Activated CD4-positive, alpha-beta T cell treated with anti-CD3 and anti-CD28 coated beads, Interleukin-2, amount 10 ng/mL, durations not matched to agents 24 days and 14 days (primary cell): ENCODE measurements at regions of chr15 and their contacts with region 1.

Region 1: GRCh38 chr15:78437762-78438302 is at the start of gene IREB2:
- DNase-seq: peak; percentile 100
- H3K4me3 Mint-ChIP-seq: peak within 1 kb of the TSS; percentile 91
- H3K27ac Mint-ChIP-seq: peak within 1 kb of the TSS; percentile 97
- H3K4me1 Mint-ChIP-seq: peaks cover 35% of the 10 kb centered on the region
- H3K27me3 Mint-ChIP-seq: no peaks in the 10 kb centered on the region
- total RNA-seq, gene IREB2: 89.1 and 89.4 TPM in 2 replicates

Region 2: DNA sequence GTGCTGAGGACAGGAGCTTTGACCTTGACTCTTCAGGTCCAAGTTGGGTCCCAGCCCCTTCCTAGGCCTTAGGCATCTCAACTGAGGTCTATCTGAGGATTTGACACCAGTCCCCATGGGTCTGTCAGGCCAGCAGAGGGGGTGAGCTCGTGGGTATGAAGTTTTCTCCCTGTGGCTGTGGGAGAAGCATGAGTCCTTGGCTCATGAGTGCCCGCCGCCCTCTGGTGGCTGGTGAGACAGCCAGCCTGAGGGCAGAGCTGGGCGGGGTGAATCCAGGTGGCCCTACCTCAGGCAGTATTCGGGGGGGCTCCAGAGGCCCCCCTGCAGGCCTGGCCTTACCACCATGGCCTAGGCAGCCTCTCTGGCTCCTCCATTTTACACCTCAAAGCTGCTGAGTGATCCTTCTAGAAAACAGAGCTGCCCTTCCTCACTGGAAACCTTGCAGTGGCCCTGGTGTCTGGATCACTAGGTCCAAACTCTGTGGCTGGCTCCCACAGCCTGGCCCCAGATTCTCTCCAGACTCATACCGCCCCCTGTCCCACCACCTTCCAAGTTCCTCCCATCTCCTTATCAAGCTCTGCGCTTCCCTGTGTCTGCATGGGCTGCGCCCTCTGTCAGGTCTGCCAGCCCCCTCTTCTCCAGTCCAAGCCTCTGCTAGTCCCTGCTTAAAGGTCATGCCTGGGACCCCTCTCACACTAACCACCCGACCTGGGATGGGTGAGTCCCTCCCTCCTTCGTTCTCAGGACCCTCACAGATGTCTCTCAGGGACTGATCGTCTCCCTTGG is 329.3 kb before region 1 on chr15:
- intact Hi-C with region 1: no loop called
- DNase-seq: peak; percentile 94
- H3K4me3 Mint-ChIP-seq: no peak overlapping the region
- H3K27ac Mint-ChIP-seq: no peak overlapping the region
- H3K4me1 Mint-ChIP-seq: peaks cover 53% of the 10 kb centered on the region
- H3K27me3 Mint-ChIP-seq: no peaks in the 10 kb centered on the region

Region 3: GRCh38 chr15:78149068-78149804 is 288.6 kb before region 1 on chr15 and contains the start of gene IDH3A:
- intact Hi-C with region 1: loop called (anchors 1 kb)
- DNase-seq: peak; percentile 100
- H3K4me3 Mint-ChIP-seq: peak within 1 kb of the TSS; percentile 98
- H3K27ac Mint-ChIP-seq: peak within 1 kb of the TSS; percentile 93
- H3K4me1 Mint-ChIP-seq: peaks cover 38% of the 10 kb centered on the region
- H3K27me3 Mint-ChIP-seq: no peaks in the 10 kb centered on the region
- total RNA-seq, gene IDH3A: 165 and 169 TPM in 2 replicates

Region 4: GRCh38 chr15:78299101-78299930 is 138.5 kb before region 1 on chr15 and contains the start of gene SKIC8:
- intact Hi-C with region 1: loop called (anchors 1 kb)
- DNase-seq: peak; percentile 98
- H3K4me3 Mint-ChIP-seq: peak within 1 kb of the TSS; percentile 99
- H3K27ac Mint-ChIP-seq: peak within 1 kb of the TSS; percentile 96
- H3K4me1 Mint-ChIP-seq: peaks cover 22% of the 10 kb centered on the region
- H3K27me3 Mint-ChIP-seq: no peaks in the 10 kb centered on the region
- total RNA-seq, gene SKIC8: 57.6 and 62.2 TPM in 2 replicates

Region 5: DNA sequence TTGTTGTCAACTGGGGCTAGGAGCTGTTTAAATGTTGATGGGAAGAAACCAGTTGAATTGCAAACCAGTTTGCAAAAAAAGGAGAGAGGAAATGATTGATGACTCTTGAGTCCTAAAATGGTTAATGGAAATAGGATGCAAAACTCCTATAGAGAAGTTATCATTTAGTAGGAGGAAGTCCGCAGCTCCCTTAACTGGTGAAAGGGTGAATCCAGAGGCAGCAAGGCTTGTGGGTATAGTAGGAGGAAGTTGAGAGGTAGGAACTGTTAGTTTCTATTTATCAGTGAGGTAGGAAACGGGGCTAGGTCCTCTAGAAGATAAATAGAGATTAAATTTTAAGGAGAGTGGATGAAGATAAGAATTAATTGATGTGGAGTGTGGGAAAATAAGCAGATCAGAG is 15.6 kb after region 1 on chr15:
- intact Hi-C with region 1: no loop called
- DNase-seq: no peak
- H3K4me3 Mint-ChIP-seq: no peak overlapping the region
- H3K27ac Mint-ChIP-seq: no peak overlapping the region
- H3K4me1 Mint-ChIP-seq: peaks cover 46% of the 10 kb centered on the region
- H3K27me3 Mint-ChIP-seq: no peaks in the 10 kb centered on the region

Region 6: DNA sequence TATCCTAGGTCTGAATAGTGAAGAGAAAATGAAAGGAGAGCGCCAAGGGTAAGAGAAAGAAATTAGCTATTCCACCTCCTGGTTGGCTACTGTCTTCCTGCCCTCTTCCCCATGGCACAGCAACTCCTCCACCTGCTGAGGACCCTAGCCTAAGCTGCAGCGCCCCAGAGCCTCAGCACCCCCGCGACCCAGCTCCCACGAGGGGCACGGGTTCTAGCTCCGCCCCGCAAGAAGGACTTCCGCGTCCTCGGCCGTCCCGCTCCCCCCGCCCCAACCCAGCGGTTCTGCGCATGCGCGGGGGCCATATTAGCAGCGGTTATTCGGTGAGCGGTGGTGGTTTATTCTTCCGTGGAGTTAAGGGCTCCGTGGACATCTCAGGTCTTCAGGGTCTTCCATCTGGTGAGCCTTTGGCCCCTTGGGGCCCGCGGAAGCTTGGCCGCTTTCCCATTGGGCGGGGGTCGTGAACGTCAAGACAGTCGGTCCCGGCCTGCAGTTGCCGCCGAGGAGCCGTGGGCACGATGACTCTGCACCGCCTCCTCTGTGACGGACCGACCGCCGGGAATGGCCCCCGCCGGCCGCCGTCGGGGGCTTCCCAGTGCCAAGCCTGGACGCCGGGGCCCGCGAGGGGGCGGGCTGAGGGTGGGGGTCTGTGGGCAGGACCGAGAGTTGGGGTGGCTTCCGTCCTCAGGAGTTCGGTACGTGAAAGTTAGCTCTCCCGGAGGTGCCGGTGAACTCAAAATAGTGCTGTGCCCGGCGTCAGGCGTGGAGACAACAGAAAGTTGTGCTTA is 102.5 kb after region 1 on chr15 and contains the start of gene PSMA4:
- intact Hi-C with region 1: loop called (anchors 1 kb)
- DNase-seq: peak; percentile 99
- H3K4me3 Mint-ChIP-seq: peak within 1 kb of the TSS; percentile 90
- H3K27ac Mint-ChIP-seq: peak within 1 kb of the TSS; percentile 96
- H3K4me1 Mint-ChIP-seq: peaks cover 28% of the 10 kb centered on the region
- H3K27me3 Mint-ChIP-seq: no peaks in the 10 kb centered on the region
- total RNA-seq, gene PSMA4: 335 and 342 TPM in 2 replicates

Region 7: DNA sequence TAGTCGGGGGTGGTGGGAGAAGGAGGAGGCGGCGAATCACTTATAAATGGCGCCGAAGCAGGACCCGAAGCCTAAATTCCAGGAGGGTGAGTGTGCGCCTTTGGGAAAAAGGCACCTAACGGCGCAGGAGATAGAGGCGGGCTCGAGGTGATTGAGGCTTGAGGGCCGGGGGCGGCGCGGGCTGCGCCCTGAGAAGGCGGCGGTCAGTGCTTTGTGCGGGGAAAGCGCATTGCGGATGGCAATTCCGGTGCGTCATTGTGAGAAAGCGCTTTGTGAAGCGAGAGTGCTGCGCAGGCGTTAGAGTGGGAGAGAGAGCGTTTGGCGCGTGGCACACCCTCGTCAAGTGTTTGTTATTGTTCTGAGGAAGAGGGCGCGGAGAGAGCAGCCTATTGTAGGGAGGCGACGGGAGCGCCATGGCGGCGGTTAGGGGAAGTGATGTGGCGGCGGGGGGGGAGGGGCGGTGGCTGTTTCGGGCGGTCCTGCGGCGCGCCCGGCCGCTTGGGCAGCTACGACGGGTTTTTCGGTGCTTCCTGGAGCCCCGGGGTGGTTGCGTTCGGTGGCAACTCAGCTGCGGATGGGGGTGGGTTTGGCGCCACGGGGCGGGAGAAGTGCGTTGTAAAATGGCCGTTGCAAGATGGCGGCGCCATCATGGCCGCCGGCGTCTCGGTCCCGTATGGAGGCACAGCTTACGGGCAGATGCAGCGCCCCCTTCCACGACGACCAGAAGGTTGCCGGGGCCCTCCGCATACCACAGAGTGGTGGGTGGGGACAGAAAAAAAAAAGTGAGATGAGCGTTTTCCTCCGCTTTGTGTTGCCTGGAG is 435.4 kb after region 1 on chr15:
- intact Hi-C with region 1: loop called (anchors 10 kb)
- DNase-seq: peak; percentile 97
- H3K4me3 Mint-ChIP-seq: peak overlapping the region; percentile 96
- H3K27ac Mint-ChIP-seq: peak overlapping the region; percentile 100
- H3K4me1 Mint-ChIP-seq: peaks cover 38% of the 10 kb centered on the region
- H3K27me3 Mint-ChIP-seq: no peaks in the 10 kb centered on the region